ENCODE measurements at regions of chr19 and their contacts with region 1.

Region 1: DNA sequence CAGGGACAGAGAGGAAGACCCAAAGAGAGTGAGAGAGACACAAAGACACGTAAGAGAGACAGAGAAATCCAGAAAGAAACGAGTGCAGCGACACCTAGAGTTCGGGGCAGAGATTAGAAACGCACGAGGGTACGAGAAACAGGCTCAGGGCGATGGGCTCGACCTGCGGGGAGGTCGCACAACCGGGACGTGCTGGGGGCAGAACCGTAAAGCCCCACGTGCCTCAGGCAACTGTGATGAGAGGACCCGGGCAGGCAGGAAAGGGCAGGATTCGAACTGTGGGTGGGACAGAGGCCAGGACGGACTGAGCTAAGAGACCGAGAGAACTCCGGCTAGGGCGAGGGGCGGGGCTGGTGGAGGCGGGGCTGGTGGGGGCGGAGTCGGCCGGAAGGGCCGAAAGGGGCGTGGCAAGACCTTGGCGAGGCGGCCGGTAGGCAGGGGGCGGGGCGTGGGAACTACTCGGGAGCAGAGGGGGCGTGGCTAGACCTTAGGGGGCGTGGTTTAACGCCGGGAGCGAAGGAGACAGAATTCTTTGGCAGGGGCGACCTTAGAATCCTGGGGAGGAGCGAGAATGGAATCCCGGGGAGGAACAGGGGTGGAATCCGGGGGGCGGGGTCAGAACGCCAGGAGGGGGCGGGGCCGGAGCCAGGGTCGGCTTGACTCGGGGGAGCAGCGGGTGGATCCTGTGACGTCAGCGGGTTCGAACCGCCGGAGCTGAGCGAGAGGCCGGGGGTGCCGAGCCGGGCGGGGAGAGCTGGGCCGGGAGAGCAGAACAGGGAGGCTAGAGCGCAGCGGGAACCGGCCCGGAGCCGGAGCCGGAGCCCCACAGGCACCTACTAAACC is at the start of gene NECTIN2:
- DNase-seq: peak; percentile 100
- H3K4me3 ChIP-seq: peak within 1 kb of the TSS; percentile 94 to 95
- H3K27ac ChIP-seq: peak within 1 kb of the TSS; percentile 98 to 99
- H3K4me1 ChIP-seq: peaks cover 27% of the 10 kb centered on the region
- H3K27me3 ChIP-seq: no peaks in the 10 kb centered on the region
- CTCF ChIP-seq: peak; percentile 69 to 84 (median 82)
- POLR2A ChIP-seq: peak; percentile 39
- total RNA-seq, gene NECTIN2: 268 to 278 TPM

Region 2: GRCh38 chr19:44782729-44783128 is 63.1 kb before region 1 on chr19:
- intact Hi-C with region 1: loop called (anchors 10 kb)
- DNase-seq: no peak
- H3K4me3 ChIP-seq: no peak overlapping the region
- H3K27ac ChIP-seq: no peak overlapping the region
- H3K4me1 ChIP-seq: no peaks in the 10 kb centered on the region
- H3K27me3 ChIP-seq: no peaks in the 10 kb centered on the region
- CTCF ChIP-seq: no peak
- POLR2A ChIP-seq: no peak

Region 3: DNA sequence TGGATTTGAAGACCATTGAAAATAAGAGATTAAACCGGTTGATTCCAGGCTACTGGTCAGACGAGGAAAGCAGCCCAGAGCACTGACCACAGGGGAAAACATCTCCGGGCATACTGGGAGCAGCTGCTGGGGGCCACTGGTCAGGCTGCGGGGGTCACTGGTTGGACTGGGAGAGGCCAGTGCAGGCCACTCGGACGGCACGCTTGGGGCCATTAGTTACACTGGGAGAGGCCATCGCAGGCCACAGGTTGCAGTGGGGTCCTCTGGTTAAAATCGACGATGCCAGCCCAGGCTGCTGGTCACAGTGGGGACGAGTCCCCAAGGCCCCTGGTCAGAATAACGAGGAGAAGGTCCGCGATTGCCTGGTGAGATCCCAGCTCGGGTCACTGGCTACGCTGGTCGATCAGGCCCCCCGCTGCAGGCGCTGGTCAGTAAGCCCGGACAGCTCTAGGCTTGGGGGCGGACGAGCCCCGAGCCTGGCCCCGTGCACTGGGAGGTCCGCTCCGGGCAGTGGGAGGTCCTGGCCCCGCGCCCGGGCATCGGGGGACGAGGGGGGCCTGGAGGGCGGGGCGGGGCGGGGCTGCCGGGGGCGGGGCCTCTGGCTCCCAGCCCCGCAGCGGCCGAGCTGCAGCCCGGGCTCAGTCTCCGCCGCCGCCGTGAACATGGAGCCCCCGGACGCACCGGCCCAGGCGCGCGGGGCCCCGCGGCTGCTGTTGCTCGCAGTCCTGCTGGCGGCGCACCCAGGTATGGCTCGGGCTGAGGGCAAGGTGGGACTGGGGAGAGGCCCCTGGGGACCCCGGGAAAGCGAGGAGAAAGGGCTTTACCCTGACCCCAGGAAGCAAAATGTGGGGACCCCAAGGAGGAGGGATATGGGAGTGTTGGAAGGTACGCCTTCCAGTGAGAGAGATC is 37.1 kb before region 1 on chr19 and contains the start of gene BCAM:
- intact Hi-C with region 1: loop called (anchors 5 kb)
- DNase-seq: peak; percentile 85
- H3K4me3 ChIP-seq: peak within 1 kb of the TSS; percentile 48 to 63
- H3K27ac ChIP-seq: peak within 1 kb of the TSS; percentile 14 to 59
- H3K4me1 ChIP-seq: peaks cover 21% of the 10 kb centered on the region
- H3K27me3 ChIP-seq: no peaks in the 10 kb centered on the region
- CTCF ChIP-seq: no peak
- POLR2A ChIP-seq: no peak
- total RNA-seq, gene BCAM: 67.8 to 128 TPM

Measured in testis (tissue), 5 donors.